OCI-LY7 (cell line): ENCODE measurements at regions of chr15 and their contacts with region 1.

Region 1: DNA sequence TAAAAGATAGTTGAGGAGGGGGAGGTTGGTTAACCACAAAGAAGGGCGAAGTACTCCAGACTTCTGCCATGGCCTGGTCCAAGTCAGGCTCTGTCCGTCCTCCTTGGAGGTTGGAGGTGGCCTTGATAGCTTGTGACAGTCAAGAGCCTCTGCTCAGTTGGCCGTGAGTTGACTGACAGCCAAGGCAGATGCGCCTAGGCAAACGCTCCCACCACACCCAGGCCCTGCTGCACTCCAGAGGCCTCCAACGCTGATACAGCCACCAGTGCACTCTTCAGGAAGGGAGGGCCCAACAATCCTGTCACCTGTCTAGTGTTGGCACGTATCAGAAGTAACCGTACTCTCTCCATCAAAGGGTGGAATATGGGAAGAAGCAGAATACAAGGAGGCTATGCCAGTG is 9.3 kb downstream of the RBPMS2 start:
- DNase-seq: no peak
- H3K4me3 ChIP-seq: no peak overlapping the region
- H3K27ac ChIP-seq: no peak overlapping the region
- H3K4me1 ChIP-seq: no peaks in the 10 kb centered on the region
- CTCF ChIP-seq: no peak

Region 2: DNA sequence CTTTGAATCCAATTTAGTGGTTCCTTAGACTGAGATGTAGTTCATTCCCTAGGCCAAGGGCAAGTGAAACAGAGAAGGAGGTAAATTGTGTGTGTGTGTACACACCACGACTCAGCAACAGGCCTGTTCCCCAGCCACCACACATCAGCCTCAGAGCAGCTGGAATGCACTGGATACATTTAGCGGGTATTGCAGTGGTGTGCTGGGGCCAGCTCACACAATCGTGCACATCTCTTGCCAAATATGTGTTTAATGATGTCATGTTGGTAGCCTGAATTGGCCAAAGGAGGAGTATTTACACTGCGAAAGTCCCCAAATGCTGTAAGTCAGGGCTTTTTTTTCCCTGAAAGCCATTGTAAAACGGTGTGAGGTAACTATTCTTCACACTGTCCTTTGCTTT is 72.9 kb before region 1 on chr15:
- CTCF ChIA-PET with region 1: interaction called, 10 read pairs
- POLR2A ChIA-PET with region 1: no interaction called
- intact Hi-C with region 1: no loop called
- DNase-seq: no peak
- H3K4me3 ChIP-seq: no peak overlapping the region
- H3K27ac ChIP-seq: no peak overlapping the region
- H3K4me1 ChIP-seq: peaks cover 16% of the 10 kb centered on the region
- CTCF ChIP-seq: no peak